ENCODE measurements at regions of chr22 and their contacts with region 1.

Region 1: GRCh38 chr22:37472418-37473006 is 13.7 kb downstream of the MFNG start:
- H3K4me3 ChIP-seq: no peak overlapping the region
- H3K27ac ChIP-seq: no peak overlapping the region
- H3K4me1 ChIP-seq: no peaks in the 10 kb centered on the region
- CTCF ChIP-seq: peak; percentile 63

Region 2: DNA sequence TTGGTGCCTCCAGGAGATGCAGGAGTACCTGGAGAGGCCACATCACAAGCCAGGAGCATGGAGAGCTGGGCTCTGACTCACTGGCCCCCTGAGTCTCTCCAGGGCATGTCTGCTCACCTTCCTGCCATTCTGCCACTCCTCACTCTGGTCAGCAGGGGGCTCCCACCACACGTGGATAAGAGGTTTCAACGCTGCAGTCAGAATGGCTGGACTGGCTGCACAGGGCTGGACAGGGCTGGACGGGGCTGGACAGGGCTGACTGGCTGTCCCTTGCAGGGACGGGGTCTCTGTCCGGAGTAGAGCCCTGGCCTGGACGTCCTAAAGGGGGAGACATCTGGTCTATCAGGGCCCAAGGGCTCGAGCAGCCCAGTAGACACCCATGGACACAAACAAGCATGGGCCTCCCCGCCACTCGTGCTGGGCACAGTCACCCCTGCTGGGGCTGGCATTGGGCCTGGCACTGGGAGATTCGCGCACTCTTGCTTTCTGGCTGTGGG is 155.6 kb before region 1 on chr22:
- CTCF ChIA-PET with region 1: interaction called, 20 read pairs
- POLR2A ChIA-PET with region 1: no interaction called
- H3K4me3 ChIP-seq: no peak overlapping the region
- H3K27ac ChIP-seq: no peak overlapping the region
- H3K4me1 ChIP-seq: no peaks in the 10 kb centered on the region
- CTCF ChIP-seq: peak; percentile 95

Region 3: DNA sequence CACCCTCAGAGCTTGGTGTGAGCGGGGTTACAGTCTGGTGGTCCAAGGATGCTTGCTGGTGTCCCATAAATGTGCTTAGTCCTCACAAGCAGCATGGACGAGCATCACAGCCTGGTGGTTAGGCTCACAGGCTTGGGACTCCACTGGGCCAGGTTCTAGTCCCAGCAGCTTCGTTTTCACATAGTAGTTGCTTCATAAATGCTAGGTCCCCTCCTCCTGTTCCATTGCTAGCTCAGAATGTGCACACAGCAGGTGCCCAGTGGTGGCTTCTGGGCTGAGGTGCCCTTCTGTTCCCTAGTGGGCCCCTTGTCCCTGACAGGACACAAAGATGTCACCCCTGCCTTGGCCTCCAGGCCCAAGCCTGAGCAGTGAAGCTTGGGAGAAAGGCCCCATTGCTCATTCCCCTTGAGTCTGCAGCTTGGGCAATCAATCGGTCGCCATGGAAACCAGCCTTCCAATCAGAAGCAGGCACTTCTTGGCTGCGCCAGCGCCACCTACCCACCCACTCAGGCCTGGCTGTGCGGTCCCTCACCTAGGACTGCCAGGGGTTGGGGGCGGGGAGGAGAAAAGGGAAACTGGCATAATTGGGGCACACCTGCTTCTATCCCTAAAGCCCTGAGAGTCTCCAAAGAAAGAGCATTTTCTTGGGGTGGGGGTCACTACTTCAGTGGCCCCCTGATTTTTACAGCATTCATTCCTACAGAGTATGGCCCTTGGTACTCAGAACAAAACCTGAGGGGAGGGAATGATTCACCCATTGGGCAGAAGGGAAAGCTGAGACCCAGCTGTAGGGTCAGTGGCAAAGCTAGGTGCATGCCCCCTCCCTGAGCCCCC is 142.1 kb before region 1 on chr22:
- CTCF ChIA-PET with region 1: interaction called, 11 read pairs
- POLR2A ChIA-PET with region 1: no interaction called
- H3K4me3 ChIP-seq: no peak overlapping the region
- H3K27ac ChIP-seq: no peak overlapping the region
- H3K4me1 ChIP-seq: no peaks in the 10 kb centered on the region
- CTCF ChIP-seq: peak; percentile 37; the same call in 1 of the 2 replicates

Region 4: GRCh38 chr22:37486224-37486845 is 13.8 kb after region 1 on chr22 and contains the start of gene MFNG:
- CTCF ChIA-PET with region 1: interaction called, 115 read pairs
- POLR2A ChIA-PET with region 1: no interaction called
- H3K4me3 ChIP-seq: no peak within 1 kb of the TSS
- H3K27ac ChIP-seq: no peak within 1 kb of the TSS
- H3K4me1 ChIP-seq: 0 out of 2 replicates have a peak, but pooled peaks cover 6% of the 10 kb centered on the region
- CTCF ChIP-seq: no peak

Region 5: DNA sequence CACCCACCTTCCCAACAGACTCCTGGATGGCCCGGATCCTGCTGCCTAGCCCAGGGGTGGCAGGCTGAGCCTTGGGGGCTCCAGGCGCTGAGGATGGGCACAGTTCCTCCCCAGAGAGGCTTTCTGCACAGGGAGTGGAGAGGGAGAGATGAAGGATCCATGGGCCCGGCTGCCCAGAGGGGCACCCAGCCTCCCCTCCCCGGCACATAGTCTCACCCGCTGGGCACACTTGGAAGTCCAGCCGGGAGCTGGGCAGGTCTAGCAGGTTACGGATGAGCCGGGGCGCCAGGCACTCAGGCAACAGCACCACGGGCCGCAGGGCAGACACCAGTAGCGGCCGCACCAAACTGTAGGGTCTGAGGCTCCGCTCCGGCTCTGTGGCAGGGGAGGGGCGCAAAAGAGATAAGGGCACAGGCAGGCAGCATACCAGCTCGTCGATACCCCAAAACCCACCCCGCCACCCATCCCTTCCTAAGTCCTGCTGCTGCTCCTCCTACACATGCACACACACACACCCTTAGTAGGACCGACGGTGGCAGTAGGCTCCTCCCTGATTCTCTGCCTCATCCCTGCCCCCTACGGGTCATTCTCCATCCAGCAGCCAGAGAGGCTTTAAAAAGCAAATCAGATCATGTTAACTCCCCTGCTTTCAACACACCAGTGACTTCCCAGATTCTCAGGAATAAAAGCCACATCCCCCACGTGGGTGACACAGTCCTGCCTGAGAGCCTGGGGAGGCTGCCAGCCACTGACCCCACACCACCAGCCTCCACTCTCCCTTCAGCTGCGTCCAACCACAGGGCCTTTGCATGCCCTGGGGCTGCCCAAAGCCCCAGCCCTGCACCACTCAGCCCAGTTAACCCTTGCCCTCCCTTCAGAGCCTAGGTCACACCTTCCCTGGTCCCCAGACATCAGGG is 20.2 kb after region 1 on chr22:
- CTCF ChIA-PET with region 1: interaction called, 115 read pairs
- POLR2A ChIA-PET with region 1: no interaction called
- H3K4me3 ChIP-seq: no peak overlapping the region
- H3K27ac ChIP-seq: no peak overlapping the region
- H3K4me1 ChIP-seq: no peaks in the 10 kb centered on the region
- CTCF ChIP-seq: peak; percentile 36

Region 6: DNA sequence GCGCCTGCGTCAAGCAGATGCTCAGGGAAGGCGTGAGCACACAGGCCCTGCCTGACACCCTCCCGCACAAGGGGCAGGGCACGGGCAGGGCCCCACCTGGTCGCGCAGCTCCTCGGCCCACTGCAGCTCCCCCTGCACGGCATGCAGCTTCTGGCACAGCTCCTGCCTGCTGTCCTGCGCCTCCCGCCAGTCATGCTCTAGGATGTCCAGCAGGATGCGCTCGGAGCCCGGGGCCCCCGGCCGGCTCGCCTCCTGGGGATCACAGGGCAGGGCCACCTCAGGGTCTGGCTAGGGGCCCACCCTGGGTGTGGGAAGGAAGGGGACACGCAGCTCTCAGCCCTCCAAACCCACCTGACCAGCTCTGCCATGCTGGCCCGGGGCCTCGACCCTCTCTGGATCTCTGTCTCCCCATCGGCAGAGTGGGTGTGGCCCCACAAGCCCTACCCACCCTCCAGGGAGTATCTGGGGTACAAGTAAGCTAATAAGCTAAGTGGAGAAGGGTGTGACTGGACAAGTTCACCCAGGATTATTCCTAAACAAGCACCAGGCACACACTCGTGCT is 36.0 kb after region 1 on chr22:
- CTCF ChIA-PET with region 1: interaction called, 11 read pairs
- POLR2A ChIA-PET with region 1: interaction called, 5 read pairs
- H3K4me3 ChIP-seq: no peak overlapping the region
- H3K27ac ChIP-seq: no peak overlapping the region
- H3K4me1 ChIP-seq: peaks cover 7% of the 10 kb centered on the region
- CTCF ChIP-seq: no peak

Region 7: DNA sequence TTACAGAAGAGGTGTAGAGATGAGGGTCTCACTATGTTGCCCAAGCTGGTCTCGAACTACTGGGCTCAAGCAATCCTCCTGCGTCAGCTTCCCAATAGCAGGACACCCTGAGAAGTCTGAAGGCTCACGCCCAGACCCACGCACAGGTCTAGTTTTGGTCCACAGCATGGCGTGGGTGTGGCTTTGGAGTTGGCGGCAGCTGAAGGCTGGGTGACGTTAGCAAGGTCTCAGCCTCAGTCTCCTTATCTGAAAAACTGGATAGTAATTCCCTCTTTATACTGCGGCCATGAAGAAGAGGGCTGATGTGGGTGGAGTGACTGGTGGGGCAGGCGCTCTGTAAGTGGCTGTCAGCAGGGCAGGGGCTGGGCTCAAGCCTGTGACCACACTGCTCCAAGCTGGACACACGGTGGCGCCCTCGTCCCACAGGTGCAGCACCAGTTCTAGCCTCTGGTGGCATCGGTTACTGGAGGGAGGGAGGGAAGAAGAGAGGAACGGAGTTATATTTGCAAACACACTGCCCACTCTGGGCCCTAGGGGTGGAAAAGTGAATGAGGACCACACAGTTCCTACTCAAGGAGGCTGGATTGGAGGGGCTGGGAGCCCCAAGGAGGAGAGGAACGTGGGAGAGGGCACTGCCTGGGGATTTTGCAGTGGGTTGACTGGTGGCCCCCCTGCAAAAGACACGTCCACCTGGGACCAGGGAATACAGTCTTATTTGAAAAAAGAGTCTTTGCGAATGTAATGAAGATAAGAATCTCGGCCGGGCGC is 66.3 kb after region 1 on chr22:
- CTCF ChIA-PET with region 1: interaction called, 14 read pairs
- POLR2A ChIA-PET with region 1: interaction called, 3 read pairs
- H3K4me3 ChIP-seq: no peak overlapping the region
- H3K27ac ChIP-seq: no peak overlapping the region; the same call in 1 of the 2 replicates
- H3K4me1 ChIP-seq: peaks cover 7% of the 10 kb centered on the region
- CTCF ChIP-seq: peak; percentile 100